Endothelial cell of umbilical vein (primary cell): ENCODE measurements at regions of chr17 and their contacts with region 1.

Region 1: GRCh38 chr17:3636154-3636907 is at the starts of genes CTNS and SHPK:
- DNase-seq: peak; percentile 95
- H3K4me3 ChIP-seq: peak within 1 kb of the TSS; percentile 65 to 83 (median 71)
- H3K27ac ChIP-seq: peak within 1 kb of the TSS; percentile 90
- H3K4me1 ChIP-seq: peaks cover 12% of the 10 kb centered on the region
- H3K27me3 ChIP-seq: no peaks in the 10 kb centered on the region
- CTCF ChIP-seq: no peak
- POLR2A ChIP-seq: peak; percentile 57
- total RNA-seq, gene CTNS: 20.8 and 25.9 TPM in 2 replicates
- total RNA-seq, gene SHPK: 15.9 and 17.8 TPM in 2 replicates

Region 2: DNA sequence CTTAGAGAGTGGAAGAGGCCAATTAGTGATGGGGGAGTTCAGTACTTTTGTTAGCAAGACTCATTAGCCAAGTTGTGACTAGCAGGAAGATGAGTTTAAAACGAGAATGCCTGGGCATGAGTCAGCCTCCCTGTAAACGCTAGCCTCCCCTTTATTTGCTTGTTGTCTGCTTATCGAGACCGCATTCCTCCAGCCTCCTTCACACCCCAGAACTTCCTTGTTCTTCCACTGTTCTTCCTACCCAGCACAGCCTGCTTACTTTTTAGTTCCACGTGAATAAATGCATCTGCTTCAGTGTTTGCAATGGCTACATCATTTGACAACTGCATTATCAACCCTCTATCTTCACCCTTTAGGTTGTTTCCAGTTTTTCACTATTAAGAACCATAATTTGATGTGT is 318.0 kb before region 1 on chr17:
- CTCF ChIA-PET with region 1: no interaction called
- POLR2A ChIA-PET with region 1: no interaction called
- dilution Hi-C with region 1: no loop called
- intact Hi-C with region 1: no loop called
- DNase-seq: no peak
- H3K4me3 ChIP-seq: no peak overlapping the region
- H3K27ac ChIP-seq: no peak overlapping the region
- H3K4me1 ChIP-seq: no peaks in the 10 kb centered on the region
- H3K27me3 ChIP-seq: no peaks in the 10 kb centered on the region
- CTCF ChIP-seq: no peak
- POLR2A ChIP-seq: no peak

Region 3: DNA sequence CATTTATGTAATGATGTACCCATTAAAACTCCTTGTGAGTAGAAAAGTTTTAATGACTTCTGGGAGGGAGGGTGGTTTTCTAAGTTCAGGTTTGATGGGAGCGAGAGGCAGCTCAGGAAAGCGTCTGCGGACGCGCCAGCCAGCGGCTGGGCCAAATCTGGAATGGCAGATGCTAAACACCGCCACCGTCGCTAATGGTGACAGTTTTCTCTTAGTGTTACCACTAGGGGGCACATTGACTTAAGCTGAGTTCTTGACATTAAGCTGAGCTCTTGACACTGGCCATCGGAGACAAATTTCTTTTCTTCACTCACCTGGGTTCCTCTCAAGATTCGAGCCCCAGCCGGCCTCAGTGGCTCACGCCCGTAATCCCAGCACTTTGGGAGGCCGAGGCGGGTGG is 33.8 kb before region 1 on chr17:
- CTCF ChIA-PET with region 1: interaction called, 15 read pairs
- POLR2A ChIA-PET with region 1: no interaction called
- dilution Hi-C with region 1: no loop called
- intact Hi-C with region 1: no loop called
- DNase-seq: no peak
- H3K4me3 ChIP-seq: no peak overlapping the region
- H3K27ac ChIP-seq: no peak overlapping the region
- H3K4me1 ChIP-seq: peaks cover 9% of the 10 kb centered on the region
- H3K27me3 ChIP-seq: no peaks in the 10 kb centered on the region
- CTCF ChIP-seq: peak; percentile 24 to 33
- POLR2A ChIP-seq: no peak